Ascending aorta (tissue), 2 donors: ENCODE measurements at regions of chr2 and their contacts with region 1.

Region 1: GRCh38 chr2:43024515-43025011 is 201.8 kb downstream of the ZFP36L2 start:
- DNase-seq: peak; percentile 33 to 80
- H3K4me3 ChIP-seq: no peak overlapping the region
- H3K27ac ChIP-seq: no peak overlapping the region
- H3K4me1 ChIP-seq: no peaks in the 10 kb centered on the region
- H3K27me3 ChIP-seq: no peaks in the 10 kb centered on the region
- CTCF ChIP-seq: peak; percentile 84 to 93 (median 89)

Region 2: GRCh38 chr2:42974721-42975717 is 49.5 kb before region 1 on chr2:
- intact Hi-C with region 1: loop called (anchors 5 kb)
- DNase-seq: peak in 1 of 2 donors; percentile 87
- H3K4me3 ChIP-seq: peak overlapping the region; percentile 23 to 66
- H3K27ac ChIP-seq: peak overlapping the region; percentile 28 to 66
- H3K4me1 ChIP-seq: peaks cover 7 to 12% of the 10 kb centered on the region in 2 donors
- H3K27me3 ChIP-seq: no peaks in the 10 kb centered on the region
- CTCF ChIP-seq: peak; percentile 93 to 98 (median 97)

Region 3: DNA sequence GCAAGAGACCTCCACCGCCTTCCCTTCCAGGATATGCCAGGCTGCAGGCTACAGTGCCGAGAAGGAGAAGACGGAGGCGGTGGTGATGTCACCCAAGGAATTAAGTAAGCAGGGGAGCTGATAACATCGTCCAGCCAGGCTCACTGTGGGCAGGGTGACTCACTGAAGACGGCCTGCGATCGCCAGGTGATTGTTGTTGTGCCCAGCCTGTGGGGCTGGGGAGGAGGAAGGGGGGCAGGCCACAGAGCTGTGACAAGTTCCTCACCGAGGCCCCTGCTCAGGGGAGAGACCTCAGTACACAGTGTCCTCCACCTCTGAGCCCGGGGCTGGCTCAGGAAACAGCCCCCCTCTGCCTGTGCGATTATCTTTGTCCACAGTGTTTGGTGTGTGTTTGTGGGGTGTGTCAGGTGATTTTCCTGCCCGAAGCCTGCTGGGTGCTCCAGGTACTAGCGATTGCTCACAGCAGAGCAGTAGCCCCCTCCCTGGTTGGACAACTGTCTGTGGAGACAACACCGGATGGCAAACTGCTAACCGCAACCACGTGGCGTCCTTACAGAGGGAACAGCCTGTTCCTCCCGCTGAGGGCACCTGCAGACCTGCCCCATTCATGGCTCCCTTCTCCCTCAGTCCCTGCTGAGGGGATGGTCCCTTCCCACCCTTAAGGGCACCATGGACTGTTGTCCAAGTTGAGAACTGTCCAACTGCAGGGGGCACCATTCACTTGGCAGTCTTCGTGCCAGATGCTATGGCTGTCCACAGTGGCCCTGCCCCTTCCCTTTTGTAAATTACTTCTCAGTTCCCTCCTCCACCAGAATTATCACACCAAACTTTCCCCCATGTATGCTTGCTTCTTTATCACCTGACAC is 106.7 kb after region 1 on chr2:
- intact Hi-C with region 1: loop called (anchors 5 kb)
- DNase-seq: peak; percentile 75 to 85
- H3K4me3 ChIP-seq: no peak overlapping the region
- H3K27ac ChIP-seq: peak overlapping the region; percentile 57 to 59
- H3K4me1 ChIP-seq: peaks cover 13 to 15% of the 10 kb centered on the region in 2 donors
- H3K27me3 ChIP-seq: no peaks in the 10 kb centered on the region
- CTCF ChIP-seq: peak in 2 of 3 experiments; percentile 3 to 16